ENCODE measurements at regions of chr10 and their contacts with region 1.

Region 1: GRCh38 chr10:6409971-6410651 is 170.0 kb downstream of the PRKCQ start:
- DNase-seq: no peak
- H3K4me3 ChIP-seq: no peak overlapping the region
- CTCF ChIP-seq: no peak

Region 2: DNA sequence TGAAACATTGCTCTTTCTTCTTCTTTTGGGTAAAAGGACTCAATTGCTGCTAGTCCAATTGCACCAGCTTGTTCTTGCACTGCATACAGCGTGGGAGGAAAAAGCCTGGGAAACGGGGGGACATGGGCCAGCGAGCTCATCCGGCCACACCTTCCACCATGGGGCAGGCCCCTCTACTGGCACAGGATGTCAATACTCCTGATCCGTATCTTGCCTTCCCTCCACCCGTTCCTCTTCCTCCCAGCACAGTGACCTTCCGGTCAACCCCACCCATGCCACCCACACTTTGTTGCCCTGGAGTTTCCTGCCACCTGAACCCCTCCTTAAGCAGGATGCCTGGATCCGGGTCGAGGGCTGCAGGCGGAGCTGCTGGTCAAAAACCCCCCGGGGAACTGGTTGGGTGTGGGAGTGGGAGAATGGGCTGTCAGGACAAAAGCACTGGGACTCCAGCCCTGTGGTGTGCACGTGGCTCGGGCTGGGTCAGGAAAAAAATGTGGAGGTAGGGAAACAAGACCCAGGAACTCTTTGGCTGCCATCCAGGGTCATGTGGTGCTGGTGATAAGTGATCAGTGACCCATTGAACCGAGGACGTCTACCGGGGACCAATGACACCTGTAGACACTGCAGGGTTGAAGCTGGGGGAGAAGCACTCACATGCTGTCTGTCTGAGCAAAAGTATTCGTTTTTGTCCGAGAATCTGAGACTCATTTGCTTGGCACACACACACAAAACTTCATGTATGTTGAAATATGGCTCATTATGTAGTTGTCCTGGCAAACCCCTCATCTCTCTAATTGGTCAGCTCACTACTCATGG is 356.1 kb before region 1 on chr10:
- CTCF ChIA-PET with region 1: no interaction called
- POLR2A ChIA-PET with region 1: no interaction called
- DNase-seq: no peak
- H3K4me3 ChIP-seq: no peak overlapping the region
- CTCF ChIP-seq: no peak

Region 3: GRCh38 chr10:6108603-6109443 is 301.3 kb before region 1 on chr10:
- CTCF ChIA-PET with region 1: interaction called, 35 read pairs
- POLR2A ChIA-PET with region 1: no interaction called
- DNase-seq: no peak
- H3K4me3 ChIP-seq: no peak overlapping the region
- CTCF ChIP-seq: peak; percentile 30

Region 4: DNA sequence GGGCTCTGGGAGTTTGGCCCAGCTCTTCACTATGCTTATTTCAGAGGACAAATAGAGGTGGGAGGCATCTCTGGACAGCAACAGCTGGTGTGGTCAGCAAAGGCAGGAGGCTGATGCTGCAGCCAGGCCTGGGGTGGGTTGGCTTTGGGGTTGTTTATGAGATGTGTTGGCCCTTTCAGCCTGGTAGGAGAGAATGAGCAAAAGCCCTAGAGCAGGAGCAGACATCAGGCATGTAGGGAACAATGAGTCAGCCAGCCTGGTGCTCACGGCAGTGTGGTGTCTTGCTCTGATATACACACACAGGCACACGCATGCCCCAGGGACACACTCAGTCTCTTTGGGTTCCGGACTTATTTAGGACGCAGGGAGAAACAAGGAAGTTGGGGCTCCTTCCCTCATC is 12.9 kb after region 1 on chr10:
- CTCF ChIA-PET with region 1: interaction called, 12 read pairs
- POLR2A ChIA-PET with region 1: no interaction called
- DNase-seq: no peak
- H3K4me3 ChIP-seq: no peak overlapping the region
- CTCF ChIP-seq: no peak

Measured in AG04449 (cell line).